ENCODE measurements at regions of chr12 and their contacts with region 1.

Region 1: GRCh38 chr12:90978117-90978770 is 23.3 kb upstream of the CCER1 start:
- DNase-seq: peak in 3 of 4 experiments; percentile 9 to 25 (median 14)
- ATAC-seq: peak; percentile 76
- H3K4me3 ChIP-seq: no peak overlapping the region
- H3K27ac ChIP-seq: no peak overlapping the region
- H3K4me1 ChIP-seq: no peaks in the 10 kb centered on the region
- H3K27me3 ChIP-seq: no peaks in the 10 kb centered on the region
- CTCF ChIP-seq: peak; percentile 40 to 60 (median 45); a peak in 4 of 6 replicates
- EP300 ChIP-seq: no peak
- POLR2A ChIP-seq: no peak
- RAD21 ChIP-seq: peak; percentile 45 to 67

Region 2: GRCh38 chr12:91109148-91109564 is 130.9 kb after region 1 on chr12:
- CTCF ChIA-PET with region 1: no interaction called
- POLR2A ChIA-PET with region 1: no interaction called
- in situ Hi-C with region 1: no loop called
- intact Hi-C with region 1: loop called (anchors 5 kb)
- DNase-seq: peak; percentile 7 to 59 (median 27)
- ATAC-seq: peak; percentile 85
- H3K4me3 ChIP-seq: no peak overlapping the region
- H3K27ac ChIP-seq: no peak overlapping the region
- H3K4me1 ChIP-seq: no peaks in the 10 kb centered on the region
- H3K27me3 ChIP-seq: no peaks in the 10 kb centered on the region
- CTCF ChIP-seq: peak; percentile 37 to 65 (median 51)
- EP300 ChIP-seq: no peak
- POLR2A ChIP-seq: no peak
- RAD21 ChIP-seq: peak; percentile 17 to 55; a peak in 2 of 4 replicates

Measured in K562 (cell line).